Panc1 (cell line): ENCODE measurements at regions of chr20 and their contacts with region 1.

Region 1: DNA sequence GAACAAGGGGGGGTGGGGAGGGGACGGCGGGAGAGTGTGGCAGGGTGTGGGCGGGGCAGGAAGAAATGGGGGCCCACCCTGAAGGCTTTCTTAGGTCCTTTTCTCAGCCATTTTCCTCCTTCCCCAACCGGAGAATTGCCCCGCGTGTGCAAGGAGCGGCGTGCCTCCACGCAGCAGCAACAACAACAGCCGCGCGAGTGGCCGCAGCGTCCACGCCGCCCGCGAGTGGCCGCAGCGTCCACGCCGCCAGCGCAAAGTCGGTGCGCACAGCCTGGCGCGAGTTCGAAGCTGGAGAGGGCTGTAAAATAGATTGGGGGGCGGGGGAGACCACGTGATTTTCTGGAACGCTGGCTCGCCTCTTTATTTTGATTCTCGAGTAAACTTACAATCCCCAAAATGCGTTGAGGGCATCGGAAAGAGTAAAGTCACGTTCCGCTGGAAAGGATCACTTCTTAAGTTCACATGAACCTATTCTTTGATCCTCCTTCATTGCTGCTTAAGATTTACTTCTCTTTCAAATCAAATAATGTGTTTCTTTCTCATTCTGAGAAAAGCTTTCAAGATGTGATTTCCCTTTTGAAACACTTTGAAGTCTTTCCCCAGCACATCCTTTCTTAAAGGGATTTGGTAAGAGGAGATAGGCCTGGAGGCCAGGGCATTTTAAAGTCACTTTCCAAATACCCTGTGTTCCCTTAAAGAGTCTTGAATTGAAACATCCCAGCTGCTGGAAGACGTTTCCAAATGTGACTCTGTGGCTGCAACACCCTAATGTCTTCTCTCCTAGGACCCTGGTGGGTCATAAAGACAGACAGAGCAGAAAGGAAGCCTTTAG is 66.7 kb upstream of the ZNF217 start:
- DNase-seq: no peak
- ATAC-seq: peak; percentile 43
- H3K4me3 ChIP-seq: no peak overlapping the region
- H3K27ac ChIP-seq: peak overlapping the region; percentile 100
- H3K4me1 ChIP-seq: peaks cover 60% of the 10 kb centered on the region
- H3K27me3 ChIP-seq: no peaks in the 10 kb centered on the region
- CTCF ChIP-seq: no peak

Region 2: GRCh38 chr20:52047811-52048764 is 1612.2 kb before region 1 on chr20:
- CTCF ChIA-PET with region 1: no interaction called
- POLR2A ChIA-PET with region 1: interaction called, 24 read pairs
- in situ Hi-C with region 1: no loop called
- intact Hi-C with region 1: no loop called
- DNase-seq: no peak
- ATAC-seq: no peak
- H3K4me3 ChIP-seq: no peak overlapping the region
- H3K27ac ChIP-seq: no peak overlapping the region
- H3K4me1 ChIP-seq: no peaks in the 10 kb centered on the region
- H3K27me3 ChIP-seq: no peaks in the 10 kb centered on the region
- CTCF ChIP-seq: no peak

Region 3: GRCh38 chr20:53530440-53530839 is 129.9 kb before region 1 on chr20:
- CTCF ChIA-PET with region 1: no interaction called
- POLR2A ChIA-PET with region 1: no interaction called
- in situ Hi-C with region 1: no loop called
- intact Hi-C with region 1: no loop called
- DNase-seq: no peak
- ATAC-seq: no peak
- H3K4me3 ChIP-seq: no peak overlapping the region
- H3K27ac ChIP-seq: no peak overlapping the region
- H3K4me1 ChIP-seq: no peaks in the 10 kb centered on the region
- H3K27me3 ChIP-seq: no peaks in the 10 kb centered on the region
- CTCF ChIP-seq: no peak

Region 4: GRCh38 chr20:53623454-53624211 is 36.7 kb before region 1 on chr20:
- CTCF ChIA-PET with region 1: no interaction called
- POLR2A ChIA-PET with region 1: interaction called, 3 read pairs
- in situ Hi-C with region 1: no loop called
- intact Hi-C with region 1: loop called (anchors 5 kb)
- DNase-seq: peak; percentile 87
- ATAC-seq: peak; percentile 75
- H3K4me3 ChIP-seq: peak overlapping the region; percentile 6 to 49
- H3K27ac ChIP-seq: peak overlapping the region; percentile 100
- H3K4me1 ChIP-seq: peaks cover 47% of the 10 kb centered on the region
- H3K27me3 ChIP-seq: no peaks in the 10 kb centered on the region
- CTCF ChIP-seq: no peak

Region 5: DNA sequence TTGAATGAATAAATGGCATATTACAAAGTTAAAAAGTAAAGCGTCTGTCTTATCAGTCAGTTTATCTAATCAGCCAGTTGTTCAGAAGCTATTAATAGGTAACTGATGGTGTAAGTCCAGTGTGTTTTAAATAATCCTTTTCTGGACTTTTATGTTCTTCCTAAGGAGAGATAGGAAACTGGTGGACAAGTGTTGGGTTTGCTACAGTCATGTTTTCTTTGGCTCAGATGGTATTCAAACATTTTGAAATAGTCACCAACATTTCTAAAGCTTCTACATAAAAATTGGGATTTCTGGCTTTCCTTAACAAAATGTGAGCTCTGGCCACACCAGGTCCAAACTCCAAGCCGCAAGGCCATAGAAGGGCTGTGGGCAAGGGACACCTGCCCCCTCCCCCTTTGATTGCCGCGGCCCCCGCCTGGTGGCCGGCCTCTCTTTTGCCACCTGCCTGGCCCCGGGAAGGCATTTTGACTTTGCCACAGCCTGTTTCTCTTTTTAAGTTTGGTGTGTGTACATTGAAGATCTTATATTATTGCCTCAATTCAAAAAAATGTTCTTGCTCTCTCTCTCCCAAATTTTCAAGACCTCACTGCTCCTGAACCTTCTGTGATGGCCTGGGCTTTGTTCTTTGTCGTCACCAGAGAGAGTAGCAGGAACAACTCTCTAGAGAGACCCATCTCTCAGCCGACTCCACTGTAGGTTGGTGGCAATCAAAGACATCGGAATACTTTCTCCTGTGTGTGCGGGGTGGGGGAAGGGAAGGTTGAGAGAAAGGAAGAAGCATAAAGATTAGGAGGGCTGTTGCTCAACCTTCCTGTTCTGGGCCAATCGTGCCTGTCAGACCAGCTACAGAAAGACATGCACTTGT is 17.4 kb after region 1 on chr20:
- CTCF ChIA-PET with region 1: interaction called, 5 read pairs
- POLR2A ChIA-PET with region 1: interaction called, 14 read pairs
- in situ Hi-C with region 1: no loop called
- intact Hi-C with region 1: no loop called
- DNase-seq: no peak
- ATAC-seq: peak; percentile 86
- H3K4me3 ChIP-seq: peak overlapping the region in 1 of 2 experiments; percentile 32; a peak in 2 of 4 replicates
- H3K27ac ChIP-seq: peak overlapping the region; percentile 98
- H3K4me1 ChIP-seq: peaks cover 46% of the 10 kb centered on the region
- H3K27me3 ChIP-seq: no peaks in the 10 kb centered on the region
- CTCF ChIP-seq: no peak